K562 (cell line): ENCODE measurements at regions of chr5 and their contacts with region 1.

Region 1: DNA sequence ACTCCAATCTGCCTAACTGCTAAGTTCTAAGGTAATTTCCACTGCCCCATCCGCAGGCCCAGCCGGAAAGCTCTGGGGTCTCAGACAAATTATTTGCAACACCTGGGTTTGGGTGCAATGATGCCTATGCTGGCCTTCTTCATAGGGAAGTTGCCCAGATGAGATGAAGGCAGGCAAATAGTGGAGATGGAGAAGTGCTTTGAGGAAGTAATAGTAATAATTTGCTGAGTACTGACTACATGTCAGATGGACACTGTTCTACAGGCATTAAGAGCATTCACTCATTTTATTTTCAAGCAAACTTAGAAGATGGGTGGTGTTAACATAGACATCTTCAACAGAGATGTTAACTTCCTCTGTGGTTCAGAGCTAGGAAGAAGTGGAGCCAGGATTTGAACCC is 3.8 kb downstream of the PCDH12 start:
- DNase-seq: no peak
- ATAC-seq: no peak
- H3K4me3 ChIP-seq: no peak overlapping the region
- H3K27ac ChIP-seq: no peak overlapping the region
- H3K4me1 ChIP-seq: peaks cover 0 to 4% of the 10 kb centered on the region in 2 experiments; a peak in 1 of 5 replicates
- H3K27me3 ChIP-seq: peaks cover 20 to 52% of the 10 kb centered on the region in 2 experiments; a peak in 4 of 5 replicates
- CTCF ChIP-seq: no peak
- EP300 ChIP-seq: no peak
- POLR2A ChIP-seq: no peak
- RAD21 ChIP-seq: no peak

Region 2: DNA sequence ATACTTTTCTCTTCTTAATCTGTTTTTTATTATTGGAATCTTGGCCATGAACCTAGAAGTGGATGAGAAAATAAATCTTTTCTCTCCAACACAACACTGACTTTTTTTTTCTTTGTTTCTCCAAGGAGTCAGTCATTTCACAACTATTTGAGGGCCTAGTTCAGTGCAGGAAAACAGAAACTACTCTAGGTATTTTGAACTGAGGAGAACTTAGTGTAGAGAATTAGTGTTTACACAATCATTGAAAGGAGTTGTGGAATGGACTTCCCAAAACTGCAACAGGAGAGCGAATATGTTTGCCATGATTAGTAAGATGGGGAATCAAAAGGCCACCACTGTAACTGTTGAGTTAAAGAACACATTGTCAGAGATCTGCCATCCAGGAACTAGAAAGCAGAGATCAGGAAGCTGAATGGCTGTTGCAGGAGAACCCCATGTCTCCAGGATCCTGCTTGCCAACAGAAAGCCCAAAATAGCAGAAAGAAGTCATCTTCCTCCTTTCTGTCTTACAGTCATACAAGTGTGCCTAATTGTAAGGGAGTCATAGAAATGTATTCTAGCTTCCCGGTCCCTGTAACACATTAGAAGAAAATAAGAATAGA is 55.6 kb before region 1 on chr5:
- CTCF ChIA-PET with region 1: no interaction called
- POLR2A ChIA-PET with region 1: no interaction called
- in situ Hi-C with region 1: no loop called
- intact Hi-C with region 1: no loop called
- DNase-seq: no peak
- ATAC-seq: no peak
- H3K4me3 ChIP-seq: no peak overlapping the region
- H3K27ac ChIP-seq: no peak overlapping the region
- H3K4me1 ChIP-seq: peaks cover 19% of the 10 kb centered on the region in 2 experiments
- H3K27me3 ChIP-seq: peaks cover 3 to 5% of the 10 kb centered on the region in 2 experiments; a peak in 2 of 5 replicates
- CTCF ChIP-seq: no peak
- EP300 ChIP-seq: no peak
- POLR2A ChIP-seq: no peak
- RAD21 ChIP-seq: no peak

Region 3: DNA sequence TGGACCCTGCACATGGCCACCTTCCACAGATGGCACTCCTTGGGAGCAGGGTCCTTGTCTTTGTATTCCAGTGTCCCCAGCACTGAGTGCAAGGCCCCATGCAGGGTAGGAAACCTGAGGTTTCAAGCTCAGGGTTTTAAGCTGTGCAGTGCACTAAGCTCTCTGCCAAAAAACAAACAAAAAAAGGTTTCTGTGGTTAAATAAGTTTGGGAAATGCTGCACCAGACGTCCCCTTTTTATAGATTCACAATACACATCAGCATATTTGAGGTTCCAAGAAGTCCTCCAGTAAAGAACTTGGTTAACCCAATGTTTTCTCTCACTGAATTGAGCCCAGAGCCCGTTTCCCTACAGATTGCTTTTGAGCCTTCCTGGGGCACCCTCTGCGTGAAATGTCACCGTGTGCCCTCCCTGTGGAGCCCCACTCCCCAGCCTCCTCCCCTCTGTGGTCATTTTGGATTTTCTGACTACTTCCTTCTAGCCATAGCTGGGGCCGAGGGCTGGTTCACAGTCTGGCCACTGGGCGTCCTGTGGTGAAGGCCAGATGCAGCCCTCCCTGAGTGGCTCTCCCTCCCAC is 13.4 kb before region 1 on chr5:
- CTCF ChIA-PET with region 1: no interaction called
- POLR2A ChIA-PET with region 1: interaction called, 18 read pairs
- in situ Hi-C with region 1: no loop called
- intact Hi-C with region 1: no loop called
- DNase-seq: peak; percentile 30 to 38 (median 34)
- ATAC-seq: peak; percentile 89
- H3K4me3 ChIP-seq: no peak overlapping the region
- H3K27ac ChIP-seq: no peak overlapping the region
- H3K4me1 ChIP-seq: peaks cover 0 to 8% of the 10 kb centered on the region in 2 experiments; a peak in 2 of 5 replicates
- H3K27me3 ChIP-seq: peaks cover 10 to 11% of the 10 kb centered on the region in 2 experiments; a peak in 3 of 5 replicates
- CTCF ChIP-seq: peak in 2 of 3 experiments; percentile 28 to 31; a peak in 2 of 6 replicates
- EP300 ChIP-seq: no peak
- POLR2A ChIP-seq: no peak; the same call in 1 of the 2 replicates
- RAD21 ChIP-seq: no peak